ENCODE measurements at regions of chr9 and their contacts with region 1.

Region 1: DNA sequence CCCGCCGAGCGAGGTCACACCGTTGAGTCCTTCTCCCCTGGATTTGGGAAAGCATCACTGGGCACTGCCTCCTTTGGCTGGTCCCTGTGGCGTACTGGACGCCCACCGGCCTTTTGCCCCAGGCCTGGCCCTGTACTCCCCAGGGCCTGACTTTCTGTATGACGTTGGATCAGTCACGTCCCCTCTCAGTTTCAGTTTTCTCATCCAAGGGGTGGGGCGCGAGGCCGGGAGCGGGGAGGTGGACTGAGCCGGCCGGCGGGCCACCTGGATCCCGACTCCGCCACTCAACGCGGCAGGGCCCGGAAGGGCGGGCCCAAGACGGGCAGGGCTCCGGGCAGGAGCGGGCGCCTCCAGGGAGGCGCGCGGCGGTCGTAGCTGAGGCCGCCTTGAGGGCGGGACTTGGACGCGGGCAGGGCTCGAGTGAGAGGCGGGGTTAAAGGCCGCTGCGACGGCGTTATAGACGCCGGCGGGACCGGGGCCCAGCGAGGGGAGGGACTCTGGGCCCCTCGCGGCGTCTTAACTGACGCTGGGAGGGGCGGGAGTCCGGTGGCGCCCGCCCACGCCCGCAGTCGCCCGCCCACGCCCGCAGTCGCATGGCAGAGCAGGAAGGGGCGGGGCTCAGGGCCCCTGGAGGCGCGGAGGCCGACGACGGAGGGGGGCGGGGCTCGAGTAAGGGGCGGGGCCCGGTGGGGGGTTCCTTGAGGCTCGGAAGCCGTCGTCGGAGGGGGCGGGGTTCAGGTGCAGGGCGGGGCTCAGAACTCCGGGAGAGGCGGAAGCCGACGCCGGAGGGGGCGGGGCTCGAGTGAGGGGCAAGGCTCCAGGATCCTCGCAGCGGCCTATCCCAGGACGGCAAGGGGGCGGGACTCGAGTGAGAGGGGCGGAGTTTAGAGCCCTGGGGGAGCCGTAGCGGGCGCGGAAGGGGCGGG is 549 bp upstream of the CARD19 start:
- DNase-seq: peak; percentile 98 to 100
- H3K4me3 ChIP-seq: peak overlapping the region; percentile 56 to 81
- H3K27ac ChIP-seq: peak overlapping the region; percentile 88 to 97
- H3K4me1 ChIP-seq: peaks cover 22 to 37% of the 10 kb centered on the region in 2 donors
- H3K27me3 ChIP-seq: no peaks in the 10 kb centered on the region
- CTCF ChIP-seq: peak in 1 of 3 experiments; percentile 4

Region 2: DNA sequence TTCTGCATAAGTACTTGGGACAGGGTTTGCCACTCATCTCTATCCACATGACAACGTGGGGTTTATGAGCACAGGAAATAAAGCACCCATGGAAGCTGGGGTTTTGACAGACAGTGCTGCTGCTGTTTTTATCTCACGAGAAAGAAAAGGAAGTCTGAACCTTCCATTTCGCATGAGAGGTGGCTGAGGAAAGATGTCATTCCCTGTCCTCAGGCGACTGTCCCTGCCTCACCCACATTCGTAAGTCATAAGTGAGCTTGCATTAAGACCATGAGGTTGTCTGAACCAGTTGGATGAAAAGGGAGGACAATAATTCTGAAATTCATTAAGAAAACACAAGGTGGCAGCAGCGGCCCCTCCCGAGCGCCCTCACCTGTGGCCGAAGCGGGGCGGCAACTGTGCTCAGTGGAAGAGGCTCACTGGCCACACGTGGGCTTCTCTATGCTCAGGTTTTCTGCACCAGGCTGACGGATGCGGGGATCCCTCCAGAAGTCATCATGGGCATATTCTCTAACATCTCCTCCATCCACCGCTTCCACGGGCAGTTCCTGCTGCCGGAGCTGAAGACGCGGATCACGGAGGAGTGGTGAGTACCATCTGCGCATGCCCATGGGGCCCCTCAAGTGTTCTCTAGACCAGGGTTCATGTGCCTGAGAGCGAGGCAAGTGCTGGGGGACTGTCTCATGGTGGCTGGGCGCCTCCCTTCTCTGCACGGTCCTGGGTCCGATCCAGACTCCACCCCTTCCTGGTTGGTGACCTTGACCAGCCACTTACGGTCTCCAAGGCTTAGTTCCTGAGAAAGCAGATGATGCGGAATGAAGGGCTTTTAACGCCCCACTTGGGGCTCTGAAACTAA is 91.7 kb before region 1 on chr9:
- intact Hi-C with region 1: loop called (anchors 5 kb)
- DNase-seq: peak in 1 of 2 donors; percentile 69
- H3K4me3 ChIP-seq: peak overlapping the region; percentile 34 to 52
- H3K27ac ChIP-seq: no peak overlapping the region
- H3K4me1 ChIP-seq: no peaks in the 10 kb centered on the region
- H3K27me3 ChIP-seq: no peaks in the 10 kb centered on the region
- CTCF ChIP-seq: peak; percentile 61 to 70 (median 63)

Region 3: GRCh38 chr9:93058355-93059096 is 36.9 kb before region 1 on chr9 and contains the start of gene SUSD3:
- intact Hi-C with region 1: loop called (anchors 1 kb)
- DNase-seq: peak in 1 of 2 donors; percentile 87
- H3K4me3 ChIP-seq: peak within 1 kb of the TSS; percentile 64 to 74
- H3K27ac ChIP-seq: peak within 1 kb of the TSS; percentile 90 to 92
- H3K4me1 ChIP-seq: peaks cover 28 to 52% of the 10 kb centered on the region in 2 donors
- H3K27me3 ChIP-seq: no peaks in the 10 kb centered on the region
- CTCF ChIP-seq: no peak
- total RNA-seq, gene SUSD3: not detected

Region 4: DNA sequence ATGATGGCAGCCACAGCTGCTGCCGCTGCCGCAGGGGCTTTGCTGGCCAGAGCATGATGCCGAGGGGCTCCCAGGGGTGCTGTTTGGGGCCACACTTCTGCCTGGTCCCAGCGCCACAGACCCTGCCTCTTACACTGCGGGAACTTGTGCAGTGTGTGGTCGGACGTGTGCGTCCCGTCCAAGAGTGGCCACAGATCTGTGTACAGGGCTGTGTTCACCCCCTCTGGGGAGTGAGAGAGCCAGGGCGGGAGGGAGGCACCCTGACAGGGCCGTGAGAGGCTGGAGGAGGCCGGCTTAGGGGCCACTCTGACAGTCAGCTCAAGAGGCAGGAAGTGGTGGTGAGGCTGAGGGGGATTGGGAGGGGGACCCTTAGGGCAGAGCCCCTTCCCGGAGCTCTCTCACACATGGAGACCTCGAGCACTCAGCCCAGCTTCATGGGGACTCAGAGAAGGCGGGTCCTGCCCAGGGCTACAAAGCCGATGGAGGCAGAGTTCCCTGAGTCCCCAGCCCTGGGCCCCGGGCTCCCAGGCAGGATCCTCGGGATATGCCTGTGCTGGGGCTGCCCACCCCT is 12.5 kb before region 1 on chr9:
- intact Hi-C with region 1: no loop called
- DNase-seq: peak in 1 of 2 donors; percentile 43
- H3K4me3 ChIP-seq: no peak overlapping the region
- H3K27ac ChIP-seq: no peak overlapping the region
- H3K4me1 ChIP-seq: no peaks in the 10 kb centered on the region
- H3K27me3 ChIP-seq: no peaks in the 10 kb centered on the region
- CTCF ChIP-seq: no peak

Region 5: GRCh38 chr9:93134015-93134739 is 38.7 kb after region 1 on chr9 and contains the start of gene NINJ1:
- intact Hi-C with region 1: loop called (anchors 1 kb)
- DNase-seq: peak in 1 of 2 donors; percentile 86
- H3K4me3 ChIP-seq: peak within 1 kb of the TSS; percentile 77 to 91
- H3K27ac ChIP-seq: peak within 1 kb of the TSS; percentile 98 to 99
- H3K4me1 ChIP-seq: peaks cover 27 to 38% of the 10 kb centered on the region in 2 donors
- H3K27me3 ChIP-seq: no peaks in the 10 kb centered on the region
- CTCF ChIP-seq: peak in 1 of 3 experiments; percentile 21
- total RNA-seq, gene NINJ1: 156 TPM

Measured in ascending aorta (tissue), 2 donors.